ENCODE measurements at regions of chr16 and their contacts with region 1.

Region 1: GRCh38 chr16:89330177-89330856 is 112.8 kb downstream of the ZNF778 start:
- DNase-seq: no peak
- H3K4me3 ChIP-seq: no peak overlapping the region
- H3K27ac ChIP-seq: peak overlapping the region in 3 of 4 donors; percentile 4 to 44 (median 23)
- H3K4me1 ChIP-seq: peaks cover 32 to 72% (median 37%) of the 10 kb centered on the region in 4 donors
- H3K27me3 ChIP-seq: no peaks in the 10 kb centered on the region
- CTCF ChIP-seq: no peak
- EP300 ChIP-seq: no peak
- POLR2A ChIP-seq: no peak

Region 2: DNA sequence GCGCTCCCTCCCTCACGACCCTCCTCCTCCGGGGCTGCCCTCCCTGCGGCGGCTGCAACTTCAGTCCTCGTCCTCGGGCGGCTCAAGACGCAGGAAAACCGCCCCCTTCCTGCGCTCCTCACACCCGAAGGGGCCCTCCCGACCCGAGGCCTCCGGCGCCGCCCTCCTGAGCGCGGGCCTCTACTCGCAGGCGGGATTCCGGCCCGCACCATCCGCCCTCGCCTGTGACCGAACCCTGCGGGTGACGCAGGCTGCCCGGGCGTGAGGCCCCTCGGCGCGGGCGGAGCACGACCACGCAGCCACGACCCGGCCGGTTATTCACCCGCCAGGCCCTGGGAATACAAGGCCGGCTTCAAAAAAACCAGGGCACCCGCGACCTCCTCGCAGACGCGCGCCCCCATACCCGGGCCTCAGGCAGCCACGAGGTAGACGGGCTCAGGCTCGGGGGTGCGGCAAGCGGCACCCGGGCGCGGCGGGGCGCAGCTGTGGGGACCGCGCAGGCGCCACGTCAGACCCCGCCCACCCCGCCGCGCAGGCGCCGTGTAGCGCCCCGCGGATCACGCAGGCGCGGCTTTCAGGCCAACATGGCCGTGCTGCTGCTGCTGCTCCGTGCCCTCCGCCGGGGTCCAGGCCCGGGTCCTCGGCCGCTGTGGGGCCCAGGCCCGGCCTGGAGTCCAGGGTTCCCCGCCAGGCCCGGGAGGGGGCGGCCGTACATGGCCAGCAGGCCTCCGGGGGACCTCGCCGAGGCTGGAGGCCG is 177.7 kb after region 1 on chr16 and contains the start of gene SPG7:
- in situ Hi-C with region 1: loop called in 1 of 4 experiments (anchors 10 kb)
- intact Hi-C with region 1: loop called (anchors 5 kb)
- DNase-seq: peak; percentile 91
- H3K4me3 ChIP-seq: peak within 1 kb of the TSS; percentile 64 to 96 (median 76)
- H3K27ac ChIP-seq: peak within 1 kb of the TSS; percentile 92 to 97 (median 93)
- H3K4me1 ChIP-seq: peaks cover 20 to 60% (median 49%) of the 10 kb centered on the region in 4 donors
- H3K27me3 ChIP-seq: no peaks in the 10 kb centered on the region
- CTCF ChIP-seq: no peak
- EP300 ChIP-seq: no peak
- POLR2A ChIP-seq: peak; percentile 87
- total RNA-seq, gene SPG7: 168 to 408 (median 285) TPM